Dorsolateral prefrontal cortex (tissue), 120 donors: ENCODE measurements at regions of chr6 and their contacts with region 1.

Region 1: GRCh38 chr6:98834060-98835031 is at the start of gene POU3F2:
- DNase-seq: peak; percentile 64 to 97 (median 94)
- H3K4me3 ChIP-seq: peak within 1 kb of the TSS; percentile 62 to 92 (median 79)
- H3K27ac ChIP-seq: peak within 1 kb of the TSS; percentile 87 to 99 (median 96)
- H3K27me3 ChIP-seq: peaks cover 0 to 58% (median 10%) of the 10 kb centered on the region in 45 donors
- CTCF ChIP-seq: peak in 6 of 56 donors; percentile 5 to 31 (median 10)
- total RNA-seq, gene POU3F2: 10.8 to 38.0 (median 20.6) TPM

Region 2: DNA sequence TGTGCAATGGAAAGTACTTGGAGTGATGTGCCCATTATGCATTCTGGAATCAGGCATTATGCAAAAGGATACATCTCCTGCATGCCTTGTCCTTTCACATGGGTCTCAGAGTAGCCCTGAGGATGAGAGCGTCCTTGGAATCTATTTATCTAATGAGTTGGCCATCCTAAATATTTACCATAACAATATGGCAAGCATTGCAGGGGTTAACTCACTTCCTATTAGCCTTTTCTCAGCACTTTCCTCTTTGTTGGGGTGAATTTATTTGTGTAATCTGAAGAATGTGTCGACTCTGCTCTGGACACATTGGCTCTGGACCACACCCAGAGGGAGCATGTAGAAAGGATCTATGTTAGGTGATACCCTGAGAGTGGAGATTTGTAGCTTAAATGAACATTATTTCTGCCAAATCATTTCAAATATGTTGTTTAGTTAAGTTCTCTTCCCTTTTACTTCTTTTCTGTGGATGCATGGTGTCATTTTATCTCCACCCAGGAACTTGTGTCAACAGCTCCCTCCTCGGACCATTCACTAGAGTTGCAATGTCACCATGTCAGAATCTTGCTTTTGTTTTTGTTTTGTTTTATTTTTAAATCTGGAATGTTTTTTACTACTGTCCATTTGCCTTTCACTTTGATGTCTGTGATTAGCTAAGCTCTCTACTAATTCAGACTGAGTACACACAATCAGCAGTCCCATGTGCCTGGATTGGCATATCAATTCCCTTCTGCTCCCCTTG is 794.3 kb before region 1 on chr6:
- intact Hi-C with region 1: loop called in 1 of 2 experiments (anchors 5 kb)
- DNase-seq: no peak
- H3K4me3 ChIP-seq: peak overlapping the region in 10 of 59 donors; percentile 3 to 35 (median 19)
- H3K27ac ChIP-seq: peak overlapping the region in 10 of 59 donors; percentile 4 to 50 (median 24)
- H3K27me3 ChIP-seq: peaks cover 0 to 3% (median 0%) of the 10 kb centered on the region in 45 donors
- CTCF ChIP-seq: peak in 53 of 56 donors; percentile 17 to 70 (median 49)

Region 3: GRCh38 chr6:98458708-98459107 is 375.6 kb before region 1 on chr6:
- intact Hi-C with region 1: loop called in 1 of 2 experiments (anchors 2 kb)
- DNase-seq: no peak
- H3K4me3 ChIP-seq: peak overlapping the region in 3 of 59 donors; percentile 9 to 39 (median 21)
- H3K27ac ChIP-seq: peak overlapping the region in 58 of 59 donors; percentile 67 to 97 (median 89)
- H3K27me3 ChIP-seq: peaks cover 0 to 5% (median 0%) of the 10 kb centered on the region in 45 donors
- CTCF ChIP-seq: peak in 7 of 56 donors; percentile 6 to 26 (median 16)

Region 4: GRCh38 chr6:98539741-98540140 is 294.6 kb before region 1 on chr6:
- intact Hi-C with region 1: loop called in 1 of 2 experiments (anchors 10 kb)
- DNase-seq: no peak
- H3K4me3 ChIP-seq: no peak overlapping the region
- H3K27ac ChIP-seq: no peak overlapping the region
- H3K27me3 ChIP-seq: no peaks in the 10 kb centered on the region
- CTCF ChIP-seq: peak in 6 of 56 donors; percentile 9 to 34 (median 20)

Region 5: DNA sequence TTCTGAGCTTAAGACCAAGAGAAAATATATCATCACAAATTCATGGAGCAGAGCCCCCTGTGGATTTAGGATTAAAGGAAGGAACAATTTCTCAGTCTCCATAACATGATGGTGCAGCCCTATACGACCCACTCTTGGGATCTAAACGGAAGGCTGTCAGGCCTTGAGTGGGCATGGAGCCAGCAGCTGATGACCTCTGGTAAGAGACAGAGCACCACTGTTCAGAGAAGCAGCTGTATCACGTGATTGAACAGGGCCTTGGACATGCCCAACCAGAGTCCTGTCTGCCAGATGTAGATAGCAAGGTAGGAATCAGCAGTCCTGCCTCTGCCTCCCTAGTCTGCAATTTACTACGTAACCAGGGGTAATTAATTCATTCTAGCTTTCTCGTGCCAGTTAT is 259.4 kb before region 1 on chr6:
- intact Hi-C with region 1: loop called in 1 of 2 experiments (anchors 5 kb)
- DNase-seq: peak; percentile 11 to 89 (median 80)
- H3K4me3 ChIP-seq: peak overlapping the region in 1 of 59 donors; percentile 3
- H3K27ac ChIP-seq: peak overlapping the region in 44 of 59 donors; percentile 0 to 80 (median 48)
- H3K27me3 ChIP-seq: no peaks in the 10 kb centered on the region
- CTCF ChIP-seq: peak in 6 of 56 donors; percentile 4 to 28 (median 19)

Region 6: DNA sequence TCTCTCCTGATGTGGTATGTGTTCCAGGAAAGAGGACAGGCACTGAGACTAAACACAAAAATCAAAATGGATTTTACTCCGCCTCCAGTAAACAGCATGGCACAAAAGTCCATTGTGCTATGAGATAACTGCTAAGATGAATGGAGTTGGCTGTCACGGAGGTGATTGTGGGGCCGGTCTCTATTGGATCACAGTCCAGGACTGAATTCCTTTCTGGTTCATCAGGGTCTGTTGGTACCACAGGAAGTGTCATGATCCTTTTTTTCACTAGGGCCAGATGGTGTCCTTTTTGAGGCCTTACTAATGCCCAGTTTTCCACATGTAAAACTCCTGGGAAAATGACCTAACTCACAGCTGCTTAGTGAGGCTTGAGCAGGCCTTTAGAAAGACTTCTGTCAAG is 192.4 kb before region 1 on chr6:
- intact Hi-C with region 1: loop called (anchors 2 to 5 kb)
- DNase-seq: peak in 4 of 10 donors; percentile 21 to 62 (median 38)
- H3K4me3 ChIP-seq: peak overlapping the region in 3 of 59 donors; percentile 4 to 30 (median 7)
- H3K27ac ChIP-seq: peak overlapping the region; percentile 25 to 91 (median 84)
- H3K27me3 ChIP-seq: no peaks in the 10 kb centered on the region
- CTCF ChIP-seq: no peak

Region 7: GRCh38 chr6:99114769-99115406 is 280.5 kb after region 1 on chr6:
- intact Hi-C with region 1: no loop called
- DNase-seq: no peak
- H3K4me3 ChIP-seq: no peak overlapping the region
- H3K27ac ChIP-seq: no peak overlapping the region
- H3K27me3 ChIP-seq: no peaks in the 10 kb centered on the region
- CTCF ChIP-seq: no peak